PC-9 (cell line): ENCODE measurements at regions of chrX and their contacts with region 1.

Region 1: GRCh38 chrX:150546711-150547153 is 21.7 kb upstream of the MTM1 start:
- DNase-seq: no peak
- H3K4me3 ChIP-seq: no peak overlapping the region
- H3K27ac ChIP-seq: no peak overlapping the region
- H3K4me1 ChIP-seq: no peaks in the 10 kb centered on the region
- H3K27me3 ChIP-seq: no peaks in the 10 kb centered on the region
- CTCF ChIP-seq: no peak

Region 2: DNA sequence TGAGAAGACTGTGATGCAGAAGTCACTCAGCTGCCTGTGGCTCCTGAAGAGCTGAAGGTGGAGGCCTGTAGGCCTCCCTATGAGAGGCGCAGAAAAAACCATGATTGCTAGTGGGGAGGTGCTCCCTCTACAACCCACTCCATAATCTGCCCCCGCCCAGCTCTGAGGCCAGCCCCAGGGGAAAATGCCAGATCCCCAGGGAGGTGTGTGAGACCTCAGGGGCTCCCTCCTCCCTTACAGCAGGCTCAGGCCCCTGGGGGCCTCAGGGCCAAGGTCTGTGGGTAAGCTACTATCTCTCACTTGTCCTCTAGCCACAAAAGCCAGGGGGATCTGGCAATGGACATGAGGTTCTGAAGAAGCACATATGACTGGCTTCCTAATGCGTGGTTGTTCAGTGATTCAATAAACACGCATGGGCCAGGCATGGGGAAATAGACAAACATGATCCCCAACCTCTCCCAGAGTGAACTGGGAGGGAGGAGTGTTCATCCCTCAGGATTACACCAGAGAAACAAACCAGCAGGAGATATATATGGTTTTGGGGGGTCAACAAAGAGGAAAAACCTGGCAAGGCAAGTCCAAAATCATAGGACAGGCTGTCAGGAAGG is 29.3 kb before region 1 on chrX:
- CTCF ChIA-PET with region 1: no interaction called
- POLR2A ChIA-PET with region 1: interaction called, 18 read pairs
- intact Hi-C with region 1: no loop called
- DNase-seq: no peak
- H3K4me3 ChIP-seq: no peak overlapping the region
- H3K27ac ChIP-seq: no peak overlapping the region
- H3K4me1 ChIP-seq: no peaks in the 10 kb centered on the region
- H3K27me3 ChIP-seq: no peaks in the 10 kb centered on the region
- CTCF ChIP-seq: no peak